Activated CD4-positive, alpha-beta T cell treated with anti-CD3 and anti-CD28 coated beads for 36 hours (primary cell): ENCODE measurements at regions of chr17 and their contacts with region 1.

Region 1: DNA sequence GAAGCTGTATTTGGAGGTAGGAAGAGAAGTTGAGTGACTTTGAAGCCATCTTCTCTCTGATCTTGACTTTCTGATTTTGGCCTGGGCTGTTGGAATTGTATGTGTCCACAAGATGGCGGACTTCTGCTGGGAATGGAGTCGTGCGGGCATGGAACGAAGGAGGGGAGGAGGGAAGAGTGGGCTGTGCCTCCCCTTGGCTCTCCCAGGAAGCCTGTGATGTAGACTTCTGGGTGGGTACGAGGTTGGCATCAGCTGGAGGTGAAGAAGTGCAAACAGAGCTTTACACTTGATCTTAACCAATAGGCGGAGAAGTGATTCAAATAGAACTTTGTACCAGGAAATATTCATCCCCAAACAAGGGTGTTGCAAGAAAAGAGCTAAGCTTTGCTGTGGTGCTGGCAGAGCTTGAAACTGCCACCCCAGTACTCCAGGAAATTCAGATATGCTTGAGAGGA is 7.4 kb upstream of the TMEM220 start:
- DNase-seq: peak; percentile 56
- ATAC-seq: peak; percentile 73
- H3K4me3 Mint-ChIP-seq: no peak overlapping the region
- H3K27ac Mint-ChIP-seq: no peak overlapping the region
- H3K4me1 Mint-ChIP-seq: peaks cover 11% of the 10 kb centered on the region
- H3K27me3 Mint-ChIP-seq: peaks cover 4% of the 10 kb centered on the region

Region 2: GRCh38 chr17:10600571-10600970 is 136.6 kb before region 1 on chr17:
- CTCF ChIA-PET with region 1: no interaction called
- POLR2A ChIA-PET with region 1: no interaction called
- intact Hi-C with region 1: no loop called
- DNase-seq: no peak
- ATAC-seq: no peak
- H3K4me3 Mint-ChIP-seq: no peak overlapping the region
- H3K27ac Mint-ChIP-seq: no peak overlapping the region
- H3K4me1 Mint-ChIP-seq: no peaks in the 10 kb centered on the region
- H3K27me3 Mint-ChIP-seq: peaks cover 3% of the 10 kb centered on the region

Region 3: GRCh38 chr17:10754109-10754508 is 16.9 kb after region 1 on chr17:
- CTCF ChIA-PET with region 1: interaction called, 5 read pairs
- POLR2A ChIA-PET with region 1: no interaction called
- intact Hi-C with region 1: loop called in 1 of 2 experiments (anchors 2 kb)
- DNase-seq: peak; percentile 60
- ATAC-seq: no peak
- H3K4me3 Mint-ChIP-seq: no peak overlapping the region
- H3K27ac Mint-ChIP-seq: no peak overlapping the region
- H3K4me1 Mint-ChIP-seq: no peaks in the 10 kb centered on the region
- H3K27me3 Mint-ChIP-seq: no peaks in the 10 kb centered on the region

Region 4: DNA sequence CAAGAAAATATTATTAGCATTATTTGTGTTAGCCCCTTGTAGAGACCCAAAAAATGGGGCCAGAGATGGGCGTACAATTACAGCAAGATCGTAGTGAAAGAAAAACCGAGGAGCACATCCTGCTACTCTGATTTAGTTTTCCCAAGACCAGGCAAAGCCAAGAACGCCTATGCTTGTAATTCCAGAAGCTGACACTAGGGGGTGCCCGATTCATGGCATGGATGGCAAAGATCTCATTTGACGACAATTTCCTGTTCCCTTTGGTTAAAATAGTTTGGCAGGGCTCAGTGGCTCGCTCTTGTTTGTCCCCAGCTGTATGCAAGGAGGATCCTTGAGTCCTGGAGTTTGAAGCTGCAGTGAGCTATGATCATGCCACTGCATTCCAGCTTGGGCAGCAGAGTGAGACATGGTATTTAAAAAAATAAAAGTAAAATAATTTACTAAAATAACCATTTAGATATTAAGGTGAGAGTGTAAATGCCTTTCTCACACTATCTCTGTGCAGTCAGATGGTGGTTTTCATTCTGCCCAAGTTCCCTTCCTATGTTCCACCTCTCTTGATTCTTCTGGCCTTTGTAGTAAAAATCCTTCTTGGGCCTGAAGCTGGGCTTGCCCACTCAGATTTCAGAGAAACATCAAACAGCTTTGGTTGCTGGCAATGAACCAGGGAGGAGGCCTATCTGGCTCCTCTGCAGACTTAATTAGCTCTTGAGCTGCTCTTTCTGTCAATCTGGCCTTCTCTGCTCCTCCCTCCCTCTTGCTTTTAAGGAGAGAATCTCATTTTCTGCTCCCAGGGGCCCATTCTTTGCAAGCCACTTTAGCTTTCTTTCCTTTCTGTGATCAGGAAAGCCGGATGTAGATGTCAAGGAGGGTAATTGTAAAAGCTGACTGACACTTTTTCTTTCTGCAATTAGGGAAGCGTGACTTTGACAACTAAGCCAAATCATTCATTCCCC is 35.5 kb after region 1 on chr17:
- CTCF ChIA-PET with region 1: interaction called, 12 read pairs
- POLR2A ChIA-PET with region 1: no interaction called
- intact Hi-C with region 1: no loop called
- DNase-seq: peak; percentile 75
- ATAC-seq: no peak
- H3K4me3 Mint-ChIP-seq: no peak overlapping the region
- H3K27ac Mint-ChIP-seq: no peak overlapping the region
- H3K4me1 Mint-ChIP-seq: no peaks in the 10 kb centered on the region
- H3K27me3 Mint-ChIP-seq: no peaks in the 10 kb centered on the region

Region 5: GRCh38 chr17:10790491-10791401 is 53.6 kb after region 1 on chr17:
- CTCF ChIA-PET with region 1: no interaction called
- POLR2A ChIA-PET with region 1: no interaction called
- intact Hi-C with region 1: no loop called
- DNase-seq: no peak
- ATAC-seq: no peak
- H3K4me3 Mint-ChIP-seq: no peak overlapping the region
- H3K27ac Mint-ChIP-seq: no peak overlapping the region
- H3K4me1 Mint-ChIP-seq: no peaks in the 10 kb centered on the region
- H3K27me3 Mint-ChIP-seq: peaks cover 2% of the 10 kb centered on the region